Activated CD4-positive, alpha-beta T cell treated with anti-CD3 and anti-CD28 coated beads for 36 hours (primary cell): ENCODE measurements at regions of chr2 and their contacts with region 1.

Region 1: DNA sequence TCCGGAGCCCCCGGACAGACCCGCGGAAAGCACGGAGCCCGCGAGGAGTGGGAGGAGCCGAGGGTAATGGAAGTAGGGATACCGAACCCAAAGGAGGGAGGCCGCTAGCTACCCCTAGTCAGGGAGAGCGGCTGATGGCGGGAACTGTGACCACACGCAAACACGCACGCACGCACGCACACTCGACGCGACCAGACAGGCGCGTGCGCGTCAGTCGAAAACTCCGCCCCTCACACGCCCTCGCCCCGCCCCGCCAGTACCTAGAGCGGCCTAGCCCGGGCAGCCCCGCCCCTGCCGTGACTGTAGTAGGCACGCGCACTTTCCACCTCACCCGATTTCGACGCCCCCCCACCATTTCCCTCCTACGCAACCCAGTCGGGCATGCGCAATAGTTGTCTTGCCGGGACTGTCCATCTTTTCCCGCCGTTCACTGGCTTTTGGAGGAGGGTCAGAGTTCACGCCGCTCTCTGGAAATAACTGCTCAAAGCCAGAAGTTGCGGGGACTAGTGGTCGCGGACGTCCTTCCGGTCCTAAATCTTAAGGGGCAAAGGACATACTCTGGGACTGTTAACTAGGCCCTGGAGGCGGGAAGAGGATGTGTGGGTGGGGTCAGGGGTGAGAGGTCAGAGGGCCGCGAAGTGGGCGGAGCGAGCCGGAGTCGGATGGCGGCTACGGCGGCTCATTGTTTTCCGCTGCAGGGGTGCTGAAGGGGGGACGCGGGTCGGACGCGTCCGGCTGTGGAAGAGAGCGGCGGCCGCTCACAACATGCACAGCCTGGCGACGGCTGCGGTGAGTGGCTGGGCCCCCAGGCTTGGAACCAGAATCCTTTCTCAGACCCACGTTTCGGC is at the starts of genes CNOT9 and USP37:
- DNase-seq: peak; percentile 100
- ATAC-seq: peak; percentile 92
- H3K4me3 Mint-ChIP-seq: peak within 1 kb of the TSS; percentile 96
- H3K27ac Mint-ChIP-seq: peak within 1 kb of the TSS; percentile 100
- H3K4me1 Mint-ChIP-seq: peaks cover 58% of the 10 kb centered on the region
- H3K27me3 Mint-ChIP-seq: no peaks in the 10 kb centered on the region
- total RNA-seq, gene CNOT9: 100 to 105 TPM
- total RNA-seq, gene USP37: 42.5 to 46.8 TPM

Region 2: DNA sequence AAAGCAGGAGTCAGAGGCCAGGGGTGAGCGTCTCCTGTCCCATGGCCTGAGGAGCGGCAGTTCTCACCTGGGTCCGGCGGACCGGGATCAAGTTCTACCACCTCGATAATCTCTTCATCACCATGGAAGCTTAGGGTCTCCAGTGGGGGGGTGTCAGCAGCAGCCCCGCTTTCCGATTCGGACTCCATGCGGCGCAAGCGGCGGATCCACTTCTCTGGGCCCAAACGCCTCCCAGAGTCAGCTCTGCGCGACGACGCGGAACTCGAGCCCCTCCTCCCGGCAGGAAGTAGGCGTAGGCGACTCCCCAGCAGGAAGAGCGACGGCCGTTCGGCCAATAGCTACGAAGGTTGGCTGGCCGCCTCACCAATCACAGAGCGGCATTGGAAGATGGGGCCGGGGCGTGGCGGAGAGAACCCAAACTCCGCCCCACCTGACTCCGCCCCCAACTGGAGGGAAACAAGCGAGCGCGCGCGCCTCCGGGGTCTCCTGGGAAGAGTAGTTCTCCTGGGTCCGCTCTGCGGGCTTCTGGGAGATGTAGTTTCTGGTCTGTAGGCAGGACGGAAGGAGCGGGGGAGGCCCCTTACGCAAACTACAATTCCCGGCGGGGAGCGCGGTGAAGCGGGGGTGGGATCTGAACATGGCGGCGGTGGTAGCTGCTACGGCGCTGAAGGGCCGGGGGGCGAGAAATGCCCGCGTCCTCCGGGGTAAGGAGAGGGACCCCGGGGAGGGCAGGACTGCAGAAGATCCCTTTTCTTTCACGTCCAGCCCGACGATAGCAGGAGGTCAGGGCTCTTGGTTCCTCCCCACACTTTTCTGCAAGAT is 298.3 kb before region 1 on chr2 and contains the starts of genes AAMP and PNKD:
- CTCF ChIA-PET with region 1: no interaction called
- POLR2A ChIA-PET with region 1: no interaction called
- intact Hi-C with region 1: loop called (anchors 1 kb)
- DNase-seq: peak; percentile 100
- ATAC-seq: peak; percentile 92
- H3K4me3 Mint-ChIP-seq: peak within 1 kb of the TSS; percentile 88
- H3K27ac Mint-ChIP-seq: peak within 1 kb of the TSS; percentile 86
- H3K4me1 Mint-ChIP-seq: peaks cover 34% of the 10 kb centered on the region
- H3K27me3 Mint-ChIP-seq: no peaks in the 10 kb centered on the region
- total RNA-seq, gene AAMP: 49.7 to 72.2 TPM
- total RNA-seq, gene PNKD: 17.8 to 18.5 TPM

Region 3: GRCh38 chr2:218406209-218406948 is 162.0 kb before region 1 on chr2:
- CTCF ChIA-PET with region 1: no interaction called
- POLR2A ChIA-PET with region 1: no interaction called
- intact Hi-C with region 1: loop called (anchors 1 to 2 kb)
- DNase-seq: peak; percentile 97
- ATAC-seq: peak; percentile 88
- H3K4me3 Mint-ChIP-seq: peak overlapping the region; percentile 75
- H3K27ac Mint-ChIP-seq: peak overlapping the region; percentile 90
- H3K4me1 Mint-ChIP-seq: peaks cover 38% of the 10 kb centered on the region
- H3K27me3 Mint-ChIP-seq: peaks cover 5% of the 10 kb centered on the region

Region 4: DNA sequence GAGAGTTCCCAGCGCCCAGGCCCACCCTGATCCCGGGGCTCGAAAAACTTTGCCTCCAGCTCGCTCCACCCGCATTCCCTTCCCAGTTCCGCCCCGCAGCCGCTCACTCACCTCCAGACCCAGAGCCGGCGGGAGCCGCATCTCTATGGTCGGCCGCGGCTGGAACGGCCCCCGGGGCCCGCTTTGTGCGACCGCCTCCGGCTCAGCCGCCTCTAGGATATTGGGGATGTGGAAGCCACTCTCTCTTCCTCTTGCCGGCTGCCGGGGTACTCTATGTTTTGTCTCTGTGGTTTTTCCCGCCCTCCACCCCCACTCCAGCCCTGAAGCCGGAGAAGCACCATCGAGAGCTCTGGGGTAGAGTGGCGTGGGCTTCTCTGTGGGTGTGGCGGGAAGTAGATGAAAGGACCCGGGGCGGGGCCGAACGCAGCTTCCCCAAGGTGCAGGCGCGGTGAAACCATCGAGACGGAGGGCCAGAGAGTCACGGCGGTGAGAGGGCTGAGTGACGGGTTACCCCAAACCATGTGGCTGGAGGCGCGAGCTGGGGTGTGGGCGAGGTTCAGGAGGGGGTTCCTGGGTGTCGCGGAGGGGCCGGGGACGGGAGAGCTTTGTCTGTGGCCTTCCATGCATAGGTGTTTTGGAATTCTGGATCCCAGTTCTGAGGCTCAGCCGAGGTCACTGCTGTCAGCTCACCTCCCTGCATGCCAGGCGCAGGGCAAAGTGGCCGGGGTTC is 91.0 kb after region 1 on chr2 and contains the starts of genes BCS1L and ZNF142:
- CTCF ChIA-PET with region 1: interaction called, 5 read pairs
- POLR2A ChIA-PET with region 1: interaction called, 4 read pairs
- intact Hi-C with region 1: loop called (anchors 1 kb)
- DNase-seq: peak; percentile 98
- ATAC-seq: peak; percentile 95
- H3K4me3 Mint-ChIP-seq: peak within 1 kb of the TSS; percentile 88
- H3K27ac Mint-ChIP-seq: peak within 1 kb of the TSS; percentile 89
- H3K4me1 Mint-ChIP-seq: peaks cover 35% of the 10 kb centered on the region
- H3K27me3 Mint-ChIP-seq: no peaks in the 10 kb centered on the region
- total RNA-seq, gene BCS1L: 74.3 to 92.3 TPM
- total RNA-seq, gene ZNF142: 31.5 to 42.4 TPM

Region 5: GRCh38 chr2:218820746-218821369 is 252.4 kb after region 1 on chr2:
- CTCF ChIA-PET with region 1: no interaction called
- POLR2A ChIA-PET with region 1: no interaction called
- intact Hi-C with region 1: no loop called
- DNase-seq: no peak
- ATAC-seq: no peak
- H3K4me3 Mint-ChIP-seq: no peak overlapping the region
- H3K27ac Mint-ChIP-seq: no peak overlapping the region
- H3K4me1 Mint-ChIP-seq: no peaks in the 10 kb centered on the region
- H3K27me3 Mint-ChIP-seq: peaks cover 10% of the 10 kb centered on the region

Region 6: DNA sequence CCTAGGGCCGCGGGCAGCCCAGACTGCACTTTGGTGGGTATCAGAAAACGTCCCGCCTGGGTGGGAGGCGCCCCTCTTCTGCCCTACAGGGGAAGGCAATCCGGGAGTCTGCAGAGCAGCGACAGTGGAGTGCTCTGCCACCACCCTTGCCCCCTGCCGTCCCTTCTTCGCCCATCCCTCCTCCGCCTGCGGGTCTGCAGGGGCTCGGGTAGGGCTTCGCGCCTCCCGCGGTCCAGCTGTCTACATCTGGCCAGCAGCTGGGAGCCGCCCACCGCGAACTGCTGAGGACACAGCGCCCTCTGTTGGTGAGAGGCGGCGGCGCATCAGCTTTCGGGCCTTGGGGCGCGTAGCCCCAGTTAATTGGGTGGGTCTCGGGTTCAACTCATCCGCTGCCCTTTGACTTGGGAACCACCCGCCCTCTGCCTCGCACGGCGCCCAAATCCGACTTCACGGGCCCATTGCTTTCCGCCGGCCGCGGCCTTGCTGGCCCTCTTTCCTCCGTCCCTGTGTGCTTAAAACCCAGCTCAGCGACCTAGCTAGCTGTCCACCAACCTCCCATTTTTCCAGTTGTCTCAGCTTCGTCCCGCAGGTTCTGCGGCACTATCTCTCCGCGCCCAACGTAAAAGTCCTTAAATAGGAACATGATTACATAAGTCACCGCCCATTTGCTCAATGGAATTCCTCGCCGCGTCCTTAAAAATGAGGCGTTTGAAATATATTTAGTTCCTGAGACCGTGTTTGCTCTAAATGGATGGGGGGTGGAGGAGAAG is 329.9 kb after region 1 on chr2:
- CTCF ChIA-PET with region 1: no interaction called
- POLR2A ChIA-PET with region 1: no interaction called
- intact Hi-C with region 1: loop called in 1 of 2 experiments (anchors 2 kb)
- DNase-seq: peak; percentile 91
- ATAC-seq: peak; percentile 15
- H3K4me3 Mint-ChIP-seq: peak overlapping the region; percentile 49
- H3K27ac Mint-ChIP-seq: no peak overlapping the region
- H3K4me1 Mint-ChIP-seq: peaks cover 42% of the 10 kb centered on the region
- H3K27me3 Mint-ChIP-seq: peaks cover 30% of the 10 kb centered on the region

Region 7: GRCh38 chr2:219229305-219230058 is 661.1 kb after region 1 on chr2 and contains the starts of genes ANKZF1 and ATG9A:
- CTCF ChIA-PET with region 1: no interaction called
- POLR2A ChIA-PET with region 1: no interaction called
- intact Hi-C with region 1: loop called in 1 of 2 experiments (anchors 1 kb)
- DNase-seq: peak; percentile 99
- ATAC-seq: peak; percentile 98
- H3K4me3 Mint-ChIP-seq: peak within 1 kb of the TSS; percentile 98
- H3K27ac Mint-ChIP-seq: peak within 1 kb of the TSS; percentile 98
- H3K4me1 Mint-ChIP-seq: peaks cover 34% of the 10 kb centered on the region
- H3K27me3 Mint-ChIP-seq: no peaks in the 10 kb centered on the region
- total RNA-seq, gene ANKZF1: 140 to 166 TPM
- total RNA-seq, gene ATG9A: 43.5 to 45.6 TPM

Region 8: GRCh38 chr2:219543601-219544358 is 975.4 kb after region 1 on chr2 and contains the starts of genes CHPF and TMEM198:
- CTCF ChIA-PET with region 1: no interaction called
- POLR2A ChIA-PET with region 1: no interaction called
- intact Hi-C with region 1: loop called in 1 of 2 experiments (anchors 5 kb)
- DNase-seq: peak; percentile 98
- ATAC-seq: peak; percentile 85
- H3K4me3 Mint-ChIP-seq: peak within 1 kb of the TSS; percentile 87
- H3K27ac Mint-ChIP-seq: peak within 1 kb of the TSS; percentile 66
- H3K4me1 Mint-ChIP-seq: peaks cover 22% of the 10 kb centered on the region
- H3K27me3 Mint-ChIP-seq: no peaks in the 10 kb centered on the region
- total RNA-seq, gene CHPF: 14.1 to 17.1 TPM
- total RNA-seq, gene TMEM198: 2.4 to 2.7 TPM